Left colon (tissue), 2 donors: ENCODE measurements at regions of chr1 and their contacts with region 1.

Region 1: DNA sequence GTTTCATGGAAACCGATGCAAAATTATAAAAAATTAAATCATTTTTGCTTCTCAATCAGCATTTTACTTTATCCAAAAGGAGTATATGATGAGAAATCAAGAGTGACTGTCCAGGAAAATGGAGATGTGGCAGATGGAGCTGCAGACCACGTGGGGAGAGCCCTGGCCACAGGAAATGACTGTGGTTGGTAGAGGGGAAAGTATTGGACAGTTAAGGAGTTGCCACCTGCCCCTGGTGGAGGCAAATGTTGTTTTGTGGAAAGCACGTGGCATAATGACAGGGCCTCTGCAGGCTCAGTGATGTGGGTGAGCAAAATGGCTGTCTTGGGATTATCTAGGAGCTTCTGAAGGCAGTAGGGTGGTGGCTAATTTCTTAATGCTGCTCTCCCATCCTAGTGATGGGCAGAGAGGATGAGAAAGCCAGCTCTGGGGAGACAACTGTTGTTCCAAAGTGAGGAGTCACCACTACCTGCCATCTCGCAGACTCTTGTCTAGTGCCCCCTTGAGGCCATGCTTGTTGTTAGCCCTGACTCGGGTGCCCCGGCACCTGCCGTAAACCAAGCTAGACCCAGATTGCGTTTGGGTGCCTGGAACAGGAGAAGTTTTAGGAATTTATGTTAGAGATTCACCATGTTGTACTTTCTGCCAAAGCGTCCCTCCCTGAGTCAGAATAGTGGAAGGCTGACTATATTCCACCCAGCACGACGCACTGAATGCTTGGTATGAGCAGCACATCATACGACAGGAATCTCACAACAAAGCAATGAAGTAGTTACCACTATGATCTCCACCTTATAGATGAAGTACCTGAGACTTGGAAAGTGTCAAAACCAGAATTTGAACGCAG is 144.0 kb downstream of the ROR1 start:
- DNase-seq: no peak
- ATAC-seq: no peak

Region 2: DNA sequence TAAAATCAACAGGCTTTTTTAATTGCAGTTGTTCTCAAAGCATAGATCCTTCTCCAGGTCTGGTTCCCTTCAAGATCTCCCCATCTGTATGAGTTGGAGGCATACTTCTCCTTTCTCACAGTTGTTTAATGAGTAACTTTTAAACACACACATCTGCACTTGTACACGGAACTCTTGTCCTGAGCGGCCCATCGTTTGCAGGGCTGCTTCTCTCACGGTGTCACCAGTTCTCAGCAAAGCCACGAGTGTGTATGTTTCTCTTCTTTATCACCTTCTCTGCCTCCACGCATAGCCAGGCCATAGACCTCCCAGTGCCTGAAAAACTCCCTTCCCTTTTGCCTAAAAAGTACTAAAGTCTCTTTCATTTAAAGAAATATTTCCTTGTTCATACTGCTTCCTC is 212.7 kb before region 1 on chr1:
- intact Hi-C with region 1: loop called in 1 of 2 experiments (anchors 10 kb)
- DNase-seq: peak; percentile 43 to 47
- ATAC-seq: peak; percentile 88